ENCODE measurements at regions of chr11 and their contacts with region 1.

Region 1: GRCh38 chr11:73295231-73295995 is 12.7 kb upstream of the ARHGEF17 start:
- DNase-seq: peak; percentile 82
- CTCF ChIP-seq: peak; percentile 99

Region 2: GRCh38 chr11:73280651-73281071 is 14.8 kb before region 1 on chr11:
- CTCF ChIA-PET with region 1: interaction called, 20 read pairs
- POLR2A ChIA-PET with region 1: no interaction called
- DNase-seq: no peak
- CTCF ChIP-seq: no peak

Region 3: GRCh38 chr11:73493956-73494598 is 198.7 kb after region 1 on chr11:
- CTCF ChIA-PET with region 1: no interaction called
- POLR2A ChIA-PET with region 1: no interaction called
- DNase-seq: no peak
- CTCF ChIP-seq: no peak